Spleen (tissue), 13 donors: ENCODE measurements at regions of chr2 and their contacts with region 1.

Region 1: GRCh38 chr2:231104115-231104713 is 20.6 kb downstream of the HTR2B start:
- DNase-seq: no peak
- H3K4me3 ChIP-seq: no peak overlapping the region
- H3K27ac ChIP-seq: peak overlapping the region in 1 of 8 donors; percentile 12
- H3K4me1 ChIP-seq: peaks cover 0 to 15% (median 10%) of the 10 kb centered on the region in 6 donors
- H3K27me3 ChIP-seq: no peaks in the 10 kb centered on the region
- CTCF ChIP-seq: peak; percentile 60 to 81 (median 74)
- POLR2A ChIP-seq: no peak

Region 2: GRCh38 chr2:231198291-231199173 is 94.3 kb after region 1 on chr2 and contains the start of gene ARMC9:
- intact Hi-C with region 1: loop called (anchors 10 kb)
- DNase-seq: peak; percentile 93
- H3K4me3 ChIP-seq: peak within 1 kb of the TSS; percentile 77 to 99 (median 95)
- H3K27ac ChIP-seq: peak within 1 kb of the TSS in 7 of 8 donors; percentile 36 to 75 (median 65)
- H3K4me1 ChIP-seq: peaks cover 0 to 24% (median 18%) of the 10 kb centered on the region in 6 donors
- H3K27me3 ChIP-seq: no peaks in the 10 kb centered on the region
- CTCF ChIP-seq: no peak
- POLR2A ChIP-seq: no peak
- total RNA-seq, gene ARMC9: 2.9 to 8.9 (median 4.9) TPM

Region 3: DNA sequence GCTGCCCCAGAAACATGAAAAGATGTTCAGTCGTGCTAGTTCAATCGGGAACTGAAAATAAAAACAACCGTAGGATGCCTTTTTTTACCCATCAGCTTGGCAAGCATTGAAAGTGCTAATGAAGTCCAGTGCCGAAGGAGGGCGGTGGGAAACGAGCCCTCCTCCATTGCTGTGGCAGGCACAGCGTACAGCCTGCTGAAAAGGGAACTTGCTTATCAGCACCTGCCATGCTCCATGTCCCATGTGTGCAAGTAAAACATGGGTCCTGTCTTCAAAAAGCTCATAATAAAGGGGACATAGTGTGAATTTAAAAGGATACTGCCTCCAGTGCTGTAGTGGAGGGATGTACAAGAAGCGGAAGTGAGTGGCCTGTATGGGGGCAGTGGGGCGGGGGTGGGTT is 176.6 kb after region 1 on chr2:
- intact Hi-C with region 1: no loop called
- DNase-seq: no peak
- H3K4me3 ChIP-seq: no peak overlapping the region
- H3K27ac ChIP-seq: no peak overlapping the region
- H3K4me1 ChIP-seq: peaks cover 0 to 7% (median 0%) of the 10 kb centered on the region in 6 donors
- H3K27me3 ChIP-seq: no peaks in the 10 kb centered on the region
- CTCF ChIP-seq: no peak
- POLR2A ChIP-seq: no peak